Common myeloid progenitor, CD34-positive (primary cell): ENCODE measurements at regions of chr11 and their contacts with region 1.

Region 1: DNA sequence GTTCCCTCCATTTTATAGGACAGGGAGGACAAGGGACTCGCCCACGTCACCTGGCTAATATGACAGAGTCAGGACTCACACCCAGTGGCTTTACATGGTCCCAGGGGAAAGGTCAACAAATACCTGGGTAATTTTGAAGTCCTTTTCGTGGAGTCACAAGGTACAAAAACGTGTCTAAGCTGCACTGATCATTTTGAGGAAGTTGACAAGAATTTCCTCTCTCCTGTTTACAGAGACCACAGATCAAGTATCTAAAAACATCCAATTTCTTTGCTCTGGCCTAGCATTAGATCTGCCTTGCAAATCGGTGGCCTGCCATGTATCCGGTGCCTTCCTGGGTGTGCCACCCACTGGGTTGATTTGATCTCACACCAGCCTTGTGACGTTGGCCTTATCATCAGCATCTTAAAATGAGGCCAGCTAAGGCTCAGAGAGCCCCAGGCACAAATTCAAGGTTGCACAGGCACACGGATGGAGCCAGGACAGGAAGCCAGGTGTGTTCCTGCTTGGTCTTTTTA is 17.6 kb downstream of the GDPD5 start:
- DNase-seq: peak; percentile 26 to 68 (median 59)
- H3K4me3 ChIP-seq: no peak overlapping the region
- H3K27ac ChIP-seq: no peak overlapping the region
- H3K4me1 ChIP-seq: peaks cover 0 to 30% (median 21%) of the 10 kb centered on the region in 4 experiments
- H3K27me3 ChIP-seq: no peaks in the 10 kb centered on the region

Region 2: DNA sequence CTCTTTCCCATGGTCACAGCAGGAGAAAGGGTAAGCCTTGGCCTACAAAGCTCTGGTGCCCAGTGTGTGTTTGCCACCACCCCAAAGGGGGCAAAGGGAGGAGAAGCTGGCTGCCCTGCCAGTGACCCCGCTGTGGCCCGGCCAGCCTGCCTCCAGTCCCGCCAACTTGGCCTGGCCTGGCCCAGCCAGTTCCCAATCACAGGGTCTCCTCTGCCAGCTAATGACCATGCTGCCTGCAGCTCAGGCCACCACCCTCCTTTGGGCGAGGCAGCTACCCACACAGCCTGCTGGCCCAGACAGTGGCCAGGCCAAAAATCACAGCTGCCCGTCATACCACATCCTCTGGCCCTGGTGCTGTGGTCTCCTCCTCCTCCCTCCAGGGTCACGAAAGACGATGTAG is 12.6 kb after region 1 on chr11:
- CTCF ChIA-PET with region 1: interaction called, 46 read pairs
- POLR2A ChIA-PET with region 1: no interaction called
- DNase-seq: no peak
- H3K4me3 ChIP-seq: no peak overlapping the region
- H3K27ac ChIP-seq: no peak overlapping the region
- H3K4me1 ChIP-seq: peaks cover 0 to 39% (median 31%) of the 10 kb centered on the region in 4 experiments
- H3K27me3 ChIP-seq: peaks cover 0 to 22% (median 11%) of the 10 kb centered on the region in 5 experiments

Region 3: DNA sequence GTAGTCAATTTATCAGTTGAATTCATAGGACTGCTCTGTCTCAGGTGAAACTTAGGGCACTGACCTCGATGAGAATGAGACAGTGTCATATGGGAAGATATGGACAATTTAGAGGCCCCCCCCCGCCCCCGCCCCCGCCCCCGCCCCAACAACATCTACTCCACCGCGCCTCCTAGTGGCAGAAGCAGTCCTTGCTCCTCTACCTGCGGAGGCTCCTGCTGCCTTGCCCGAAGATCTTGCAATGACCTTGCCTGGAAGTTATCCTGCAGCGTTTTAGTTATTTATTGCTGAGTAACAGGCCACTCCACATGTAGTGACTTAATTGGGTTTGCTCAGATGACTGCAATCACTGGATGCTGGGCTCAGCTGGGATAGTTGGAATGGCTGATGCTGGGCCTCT is 69.1 kb after region 1 on chr11:
- CTCF ChIA-PET with region 1: no interaction called
- POLR2A ChIA-PET with region 1: no interaction called
- DNase-seq: peak in 2 of 3 donors; percentile 24 to 40
- H3K4me3 ChIP-seq: no peak overlapping the region
- H3K27ac ChIP-seq: no peak overlapping the region
- H3K4me1 ChIP-seq: peaks cover 0 to 13% (median 10%) of the 10 kb centered on the region in 4 experiments
- H3K27me3 ChIP-seq: no peaks in the 10 kb centered on the region